Calu3 (cell line): ENCODE measurements at regions of chr5 and their contacts with region 1.

Region 1: DNA sequence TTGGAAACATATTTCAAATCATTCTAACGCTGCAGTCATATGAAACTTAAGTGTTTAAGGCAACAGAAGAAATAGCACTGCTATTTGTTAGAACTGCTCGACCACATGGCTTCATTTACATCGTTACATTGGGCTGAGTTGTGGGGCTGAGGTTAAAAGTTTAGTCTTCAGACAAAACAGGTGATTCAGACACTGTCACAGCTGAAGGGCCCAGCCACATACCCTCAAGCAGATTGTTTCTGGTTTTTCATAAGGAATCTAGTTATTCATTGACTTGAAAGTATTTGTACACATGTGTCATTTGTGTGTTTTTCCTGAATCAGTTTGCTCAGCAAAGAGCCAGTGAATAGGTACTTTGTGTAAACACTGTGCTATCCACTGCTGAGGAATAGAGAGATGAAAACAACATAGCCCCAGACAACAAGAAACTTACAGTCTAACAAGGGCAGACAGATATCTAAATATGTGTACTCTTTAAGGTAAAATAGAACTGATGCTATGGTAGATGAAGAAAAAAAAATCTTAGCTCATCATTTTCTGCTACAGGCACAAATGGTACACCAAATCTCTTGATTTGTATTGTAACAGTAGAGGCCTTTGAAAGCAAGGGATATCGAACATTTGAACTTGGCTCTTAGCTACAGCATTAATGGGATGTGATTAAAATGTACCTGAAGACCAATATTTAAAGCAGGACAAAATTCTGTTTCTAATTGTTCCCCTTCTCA is 357.6 kb upstream of the RPS23 start:
- DNase-seq: peak; percentile 72
- H3K4me3 Mint-ChIP-seq: no peak overlapping the region
- H3K27ac Mint-ChIP-seq: peak overlapping the region; percentile 81
- H3K4me1 Mint-ChIP-seq: peaks cover 61% of the 10 kb centered on the region
- H3K27me3 Mint-ChIP-seq: no peaks in the 10 kb centered on the region
- CTCF ChIP-seq: no peak

Region 2: DNA sequence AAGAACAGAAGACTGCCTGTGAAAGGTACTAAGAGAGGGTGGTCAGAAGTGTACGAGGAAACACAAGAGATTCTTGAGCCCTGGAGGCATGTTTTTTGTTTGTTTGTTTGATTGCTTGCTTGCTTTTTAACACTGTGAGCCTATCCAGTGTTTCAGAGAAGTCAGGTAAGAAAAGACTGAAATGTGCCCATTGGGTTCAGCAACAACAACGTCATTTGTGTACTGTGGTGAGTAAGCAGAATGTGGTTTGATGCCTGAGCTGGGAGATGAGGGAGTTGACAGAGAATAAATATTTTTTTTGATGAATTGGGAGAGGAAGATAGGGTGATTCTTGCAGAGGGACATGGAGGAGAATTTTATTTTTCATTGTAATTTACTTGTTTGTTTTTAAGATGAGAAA is 430.7 kb before region 1 on chr5:
- CTCF ChIA-PET with region 1: no interaction called
- intact Hi-C with region 1: no loop called
- DNase-seq: no peak
- H3K4me3 Mint-ChIP-seq: no peak overlapping the region
- H3K27ac Mint-ChIP-seq: no peak overlapping the region
- H3K4me1 Mint-ChIP-seq: no peaks in the 10 kb centered on the region
- H3K27me3 Mint-ChIP-seq: no peaks in the 10 kb centered on the region
- CTCF ChIP-seq: no peak

Region 3: DNA sequence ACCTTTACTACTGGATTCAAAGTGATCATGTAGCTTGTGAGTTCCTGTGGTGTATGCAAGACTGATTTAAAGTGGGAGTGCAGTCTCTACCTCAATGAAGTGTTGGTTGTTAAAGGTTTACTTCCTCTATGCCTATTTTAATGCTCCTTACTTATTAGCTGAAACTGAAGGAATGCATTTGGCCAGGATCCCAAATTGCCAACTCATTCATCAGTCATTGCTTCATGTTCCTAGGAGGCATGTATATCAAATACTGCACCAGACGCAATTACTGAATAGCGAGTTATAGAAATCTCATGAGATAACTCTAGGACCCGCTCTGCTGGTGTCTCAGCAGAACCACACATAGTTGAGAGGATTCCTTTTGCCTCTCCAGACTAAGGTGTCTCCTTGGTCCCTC is 214.6 kb before region 1 on chr5:
- CTCF ChIA-PET with region 1: no interaction called
- intact Hi-C with region 1: loop called (anchors 2 kb)
- DNase-seq: peak; percentile 68
- H3K4me3 Mint-ChIP-seq: peak overlapping the region; percentile 19
- H3K27ac Mint-ChIP-seq: peak overlapping the region; percentile 75
- H3K4me1 Mint-ChIP-seq: peaks cover 77% of the 10 kb centered on the region
- H3K27me3 Mint-ChIP-seq: no peaks in the 10 kb centered on the region
- CTCF ChIP-seq: no peak